H1 (cell line): ENCODE measurements at regions of chr19 and their contacts with region 1.

Region 1: GRCh38 chr19:58042495-58043340 is 8.9 kb downstream of the ZSCAN1 start:
- DNase-seq: peak; percentile 84 to 87
- H3K4me3 ChIP-seq: peak overlapping the region in 2 of 4 experiments; percentile 4 to 44; a peak in 1 of 8 replicates
- H3K27ac ChIP-seq: no peak overlapping the region
- H3K4me1 ChIP-seq: peaks cover 0 to 17% (median 11%) of the 10 kb centered on the region in 4 experiments; a peak in 6 of 7 replicates
- H3K27me3 ChIP-seq: peaks cover 0 to 5% (median 4%) of the 10 kb centered on the region in 4 experiments; a peak in 3 of 7 replicates
- CTCF ChIP-seq: peak; percentile 87 to 97 (median 91)
- EP300 ChIP-seq: no peak; a peak in 1 of 3 replicates
- POLR2A ChIP-seq: no peak
- RAD21 ChIP-seq: peak; percentile 75 to 79

Region 2: GRCh38 chr19:58021541-58022282 is 21.0 kb before region 1 on chr19:
- CTCF ChIA-PET with region 1: interaction called, 21 read pairs
- POLR2A ChIA-PET with region 1: interaction called, 10 read pairs
- DNase-seq: peak in 1 of 2 experiments; percentile 72
- H3K4me3 ChIP-seq: no peak overlapping the region
- H3K27ac ChIP-seq: no peak overlapping the region
- H3K4me1 ChIP-seq: no peaks in the 10 kb centered on the region
- H3K27me3 ChIP-seq: no peaks in the 10 kb centered on the region; a peak in 3 of 7 replicates
- CTCF ChIP-seq: peak; percentile 46 to 84 (median 71)
- EP300 ChIP-seq: no peak
- POLR2A ChIP-seq: no peak
- RAD21 ChIP-seq: peak; percentile 88 to 91

Region 3: DNA sequence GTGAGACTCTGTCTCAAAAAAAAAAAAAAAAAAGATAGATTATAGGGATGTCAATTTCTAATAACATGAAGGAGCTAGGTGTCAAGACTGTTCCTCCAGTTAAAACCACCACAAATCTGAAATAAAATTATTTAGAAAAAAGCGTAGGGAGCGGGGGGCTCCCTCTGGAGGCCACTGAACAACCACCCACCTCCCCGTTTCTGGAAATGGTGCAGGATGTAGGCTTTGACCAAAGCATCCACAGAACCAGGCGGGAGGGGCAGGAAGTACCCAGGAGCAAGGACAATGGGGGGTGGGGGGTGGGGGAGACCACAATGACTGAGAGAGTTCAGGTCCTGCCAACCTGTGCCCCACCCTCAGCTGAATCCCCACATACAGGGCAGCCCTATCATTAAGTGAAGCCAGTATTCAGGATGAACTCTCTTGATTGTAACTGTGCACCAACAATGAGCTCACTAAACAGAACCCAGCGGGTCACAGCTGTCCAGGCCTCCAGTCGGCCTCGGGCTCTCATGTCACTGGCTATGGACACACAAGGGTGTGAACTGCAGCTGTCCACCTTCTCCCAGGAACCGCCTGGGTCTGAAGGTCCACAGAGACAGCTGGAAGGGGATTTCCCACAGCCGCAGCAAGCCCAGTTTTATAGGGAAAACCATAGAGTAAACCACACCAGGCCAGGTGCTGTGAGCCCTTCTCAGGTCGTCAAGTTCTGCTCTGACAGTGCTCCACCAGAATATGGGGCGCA is 48.7 kb after region 1 on chr19:
- CTCF ChIA-PET with region 1: interaction called, 43 read pairs
- POLR2A ChIA-PET with region 1: interaction called, 8 read pairs
- DNase-seq: no peak
- H3K4me3 ChIP-seq: no peak overlapping the region
- H3K27ac ChIP-seq: no peak overlapping the region
- H3K4me1 ChIP-seq: 0 out of 7 replicates have a peak, but pooled peaks cover 0 to 2% (median 0%) of the 10 kb centered on the region in 4 experiments
- H3K27me3 ChIP-seq: no peaks in the 10 kb centered on the region
- CTCF ChIP-seq: peak in 1 of 3 experiments; percentile 23; a peak in 1 of 4 replicates
- EP300 ChIP-seq: no peak
- POLR2A ChIP-seq: no peak
- RAD21 ChIP-seq: peak; percentile 27 to 31; a peak in 2 of 4 replicates